A549 (cell line): ENCODE measurements at regions of chr17 and their contacts with region 1.

Region 1: DNA sequence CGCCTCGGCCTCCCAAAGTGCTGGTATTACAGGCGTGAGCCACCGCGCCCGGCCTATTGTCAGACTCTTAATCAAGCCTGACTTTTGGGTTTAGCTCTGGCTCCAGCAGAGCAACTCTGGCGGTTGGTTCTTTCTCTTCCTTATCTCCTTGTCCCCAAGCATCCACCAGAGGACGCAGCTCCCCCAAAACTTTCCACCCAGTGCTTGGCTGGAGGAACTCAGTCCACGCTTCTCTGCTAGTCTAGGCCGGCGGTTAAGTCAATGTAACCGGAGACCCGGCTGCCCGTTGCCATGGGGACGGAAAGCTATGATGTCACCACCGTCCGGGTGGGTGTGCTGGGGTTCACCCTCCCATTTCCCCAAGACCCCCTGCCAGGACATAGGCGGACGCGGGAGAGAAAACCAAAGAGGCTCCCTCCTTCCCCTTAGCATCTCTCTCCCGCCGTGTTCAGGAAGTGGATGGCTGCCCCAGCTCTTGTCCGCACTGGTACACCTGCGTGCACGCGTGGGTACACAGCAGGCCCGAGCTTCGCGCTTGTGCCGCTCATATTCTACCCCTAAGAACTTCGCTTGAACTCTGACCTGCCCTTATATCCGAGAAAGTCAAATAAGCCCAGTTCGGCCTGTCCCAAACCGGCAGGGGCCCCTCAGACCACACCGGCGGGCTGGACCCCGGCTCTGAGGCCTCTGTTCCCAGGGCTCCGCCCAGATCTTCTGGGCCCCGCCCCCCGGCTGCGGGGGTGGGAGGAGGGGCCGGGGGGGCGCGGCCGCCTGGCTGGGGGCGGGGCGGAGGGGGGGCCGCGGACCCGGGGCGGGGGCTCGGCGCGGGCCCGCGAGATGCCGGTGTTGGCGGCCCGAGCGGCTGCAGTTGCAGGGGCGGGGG is at the start of gene RND2:
- DNase-seq: peak; percentile 96 to 99
- ATAC-seq: peak; percentile 52 to 69
- H3K4me3 ChIP-seq: peak within 1 kb of the TSS; percentile 53
- H3K27ac ChIP-seq: peak within 1 kb of the TSS; percentile 78 to 88
- H3K4me1 ChIP-seq: peaks cover 21% of the 10 kb centered on the region
- CTCF ChIP-seq: peak; percentile 73
- EP300 ChIP-seq: no peak
- POLR2A ChIP-seq: peak; percentile 46
- RAD21 ChIP-seq: peak; percentile 79 to 81
- polyA plus RNA-seq, gene RND2: 0.19 and 0.33 TPM in 2 replicates

Region 2: DNA sequence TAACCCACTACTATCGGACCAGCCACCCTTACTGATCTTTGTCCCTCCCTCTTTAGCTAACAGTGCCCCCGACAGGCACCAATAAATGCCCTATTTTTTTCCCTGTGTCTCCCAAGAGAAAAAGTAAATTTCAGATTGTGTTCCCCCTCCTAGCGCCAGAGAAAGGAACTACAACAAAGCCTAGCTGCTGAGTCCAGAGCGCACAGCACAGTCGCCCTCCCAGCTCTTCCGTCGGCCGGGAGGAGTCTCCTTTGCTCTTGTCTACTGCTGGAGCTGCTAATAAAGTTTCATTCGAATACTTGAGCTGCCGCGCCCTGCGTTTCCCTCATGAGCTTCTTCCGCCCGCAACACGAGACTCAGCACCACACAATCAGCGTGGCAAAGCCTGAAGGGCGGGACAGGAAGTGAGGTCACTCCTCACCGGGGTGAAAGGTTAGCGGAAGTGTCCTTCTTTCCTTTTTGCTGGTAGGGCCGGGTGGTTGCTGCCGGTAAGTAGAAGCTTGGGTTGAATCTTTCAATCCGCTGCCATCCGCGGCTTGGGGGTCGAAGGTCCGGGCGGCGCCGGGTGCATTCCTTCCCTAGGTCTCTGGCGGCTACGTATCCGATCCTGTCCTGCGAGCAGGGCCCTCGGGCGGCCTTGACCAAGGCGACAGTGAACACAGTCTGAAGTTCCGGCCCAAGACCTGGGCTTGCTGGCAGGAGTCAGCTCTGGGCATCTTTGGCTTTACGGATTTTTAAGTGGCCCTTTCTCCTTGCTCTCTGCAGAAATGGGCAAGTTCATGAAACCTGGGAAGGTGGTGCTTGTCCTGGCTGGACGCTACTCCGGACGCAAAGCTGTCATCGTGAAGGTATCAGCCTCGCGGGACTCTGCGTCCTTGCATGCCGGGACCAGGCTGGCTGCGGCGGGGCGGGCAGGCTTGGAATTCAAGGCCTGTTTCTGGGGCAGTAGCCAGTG is 26.4 kb before region 1 on chr17 and contains the start of gene RPL27:
- CTCF ChIA-PET with region 1: interaction called, 16 read pairs
- POLR2A ChIA-PET with region 1: interaction called, 40 read pairs
- DNase-seq: peak; percentile 96 to 100
- ATAC-seq: peak; percentile 92 to 95
- H3K4me3 ChIP-seq: peak within 1 kb of the TSS; percentile 66
- H3K27ac ChIP-seq: peak within 1 kb of the TSS; percentile 87 to 91
- H3K4me1 ChIP-seq: peaks cover 45% of the 10 kb centered on the region
- CTCF ChIP-seq: peak; percentile 88
- EP300 ChIP-seq: no peak; a peak in 1 of 5 replicates
- POLR2A ChIP-seq: peak; percentile 88
- RAD21 ChIP-seq: peak; percentile 79 to 84
- polyA plus RNA-seq, gene RPL27: 5,588 and 5,746 TPM in 2 replicates

Region 3: GRCh38 chr17:43043307-43043706 is 18.7 kb after region 1 on chr17:
- CTCF ChIA-PET with region 1: interaction called, 16 read pairs
- POLR2A ChIA-PET with region 1: no interaction called
- DNase-seq: no peak
- ATAC-seq: no peak
- H3K4me3 ChIP-seq: no peak overlapping the region
- H3K27ac ChIP-seq: no peak overlapping the region
- H3K4me1 ChIP-seq: no peaks in the 10 kb centered on the region
- CTCF ChIP-seq: no peak
- EP300 ChIP-seq: no peak
- POLR2A ChIP-seq: no peak
- RAD21 ChIP-seq: no peak

Region 4: GRCh38 chr17:43090022-43090421 is 65.4 kb after region 1 on chr17:
- CTCF ChIA-PET with region 1: interaction called, 10 read pairs
- POLR2A ChIA-PET with region 1: interaction called, 4 read pairs
- DNase-seq: no peak
- ATAC-seq: no peak
- H3K4me3 ChIP-seq: no peak overlapping the region
- H3K27ac ChIP-seq: no peak overlapping the region
- H3K4me1 ChIP-seq: no peaks in the 10 kb centered on the region
- CTCF ChIP-seq: no peak
- EP300 ChIP-seq: no peak
- POLR2A ChIP-seq: no peak
- RAD21 ChIP-seq: no peak

Region 5: GRCh38 chr17:43170766-43171585 is 146.3 kb after region 1 on chr17 and contains the start of gene NBR1:
- CTCF ChIA-PET with region 1: interaction called, 21 read pairs
- POLR2A ChIA-PET with region 1: interaction called, 8 read pairs
- DNase-seq: peak; percentile 99 to 100
- ATAC-seq: peak; percentile 86 to 90
- H3K4me3 ChIP-seq: peak within 1 kb of the TSS; percentile 74
- H3K27ac ChIP-seq: peak within 1 kb of the TSS; percentile 86 to 90
- H3K4me1 ChIP-seq: peaks cover 43% of the 10 kb centered on the region
- CTCF ChIP-seq: no peak; the same call in 2 of the 3 replicates
- EP300 ChIP-seq: no peak
- POLR2A ChIP-seq: peak; percentile 2; the same call in 1 of the 2 replicates
- RAD21 ChIP-seq: no peak
- polyA plus RNA-seq, gene NBR1: 86.8 and 103 TPM in 2 replicates